Dendritic cell treated with granulocyte-macrophage colony-stimulating factor and Interleukin-4, amounts not matched to agents 40 ng/mL and 50 ng/mL, for 4 days (primary cell): ENCODE measurements at regions of chr3 and their contacts with region 1.

Region 1: GRCh38 chr3:187745201-187746058 is at the start of gene BCL6:
- H3K4me3 Mint-ChIP-seq: peak within 1 kb of the TSS; percentile 87
- H3K27ac Mint-ChIP-seq: peak within 1 kb of the TSS; percentile 100
- H3K4me1 Mint-ChIP-seq: peaks cover 49% of the 10 kb centered on the region
- H3K27me3 Mint-ChIP-seq: no peaks in the 10 kb centered on the region

Region 2: GRCh38 chr3:187919048-187919447 is 173.6 kb after region 1 on chr3:
- intact Hi-C with region 1: loop called (anchors 5 kb)
- H3K4me3 Mint-ChIP-seq: no peak overlapping the region
- H3K27ac Mint-ChIP-seq: peak overlapping the region; percentile 61
- H3K4me1 Mint-ChIP-seq: peaks cover 55% of the 10 kb centered on the region
- H3K27me3 Mint-ChIP-seq: peaks cover 3% of the 10 kb centered on the region

Region 3: GRCh38 chr3:188154014-188154808 is 408.8 kb after region 1 on chr3 and contains the start of gene LPP:
- intact Hi-C with region 1: loop called (anchors 2 kb)
- H3K4me3 Mint-ChIP-seq: peak within 1 kb of the TSS; percentile 99
- H3K27ac Mint-ChIP-seq: peak within 1 kb of the TSS; percentile 97
- H3K4me1 Mint-ChIP-seq: peaks cover 59% of the 10 kb centered on the region
- H3K27me3 Mint-ChIP-seq: no peaks in the 10 kb centered on the region

Region 4: DNA sequence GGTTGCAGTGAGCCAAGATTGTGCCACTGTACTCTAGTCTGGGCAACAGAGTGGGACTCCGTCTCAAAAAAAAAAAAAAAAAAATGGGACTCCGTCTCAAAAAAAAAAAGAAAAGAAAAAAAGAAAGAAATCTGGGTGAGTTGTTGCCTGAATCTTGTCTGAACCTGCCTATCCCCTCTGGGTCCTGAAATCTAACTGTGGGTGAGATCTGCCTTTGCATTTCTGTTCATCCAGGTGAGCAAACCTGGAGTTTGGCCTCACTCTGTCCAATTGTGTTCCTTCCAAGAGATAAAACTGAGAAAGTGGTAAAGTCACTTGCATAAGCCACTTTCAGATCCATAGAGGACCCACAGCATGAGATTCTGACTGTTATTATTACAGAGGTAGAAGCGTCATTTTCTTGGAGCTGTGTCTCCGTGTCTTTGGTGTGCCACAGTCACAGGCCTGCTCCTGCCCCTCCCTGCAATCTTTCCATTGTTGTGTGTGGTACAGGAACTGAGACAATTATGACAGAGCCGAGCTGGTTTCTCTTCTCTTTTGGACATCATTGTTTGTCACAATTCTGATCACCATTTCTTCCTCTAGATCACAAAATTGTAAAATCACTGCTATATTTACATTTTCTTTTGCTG is 644.4 kb after region 1 on chr3:
- intact Hi-C with region 1: loop called (anchors 1 kb)
- H3K4me3 Mint-ChIP-seq: peak overlapping the region; percentile 34
- H3K27ac Mint-ChIP-seq: peak overlapping the region; percentile 96
- H3K4me1 Mint-ChIP-seq: peaks cover 66% of the 10 kb centered on the region
- H3K27me3 Mint-ChIP-seq: no peaks in the 10 kb centered on the region